ENCODE measurements at regions of chr3 and their contacts with region 1.

Region 1: DNA sequence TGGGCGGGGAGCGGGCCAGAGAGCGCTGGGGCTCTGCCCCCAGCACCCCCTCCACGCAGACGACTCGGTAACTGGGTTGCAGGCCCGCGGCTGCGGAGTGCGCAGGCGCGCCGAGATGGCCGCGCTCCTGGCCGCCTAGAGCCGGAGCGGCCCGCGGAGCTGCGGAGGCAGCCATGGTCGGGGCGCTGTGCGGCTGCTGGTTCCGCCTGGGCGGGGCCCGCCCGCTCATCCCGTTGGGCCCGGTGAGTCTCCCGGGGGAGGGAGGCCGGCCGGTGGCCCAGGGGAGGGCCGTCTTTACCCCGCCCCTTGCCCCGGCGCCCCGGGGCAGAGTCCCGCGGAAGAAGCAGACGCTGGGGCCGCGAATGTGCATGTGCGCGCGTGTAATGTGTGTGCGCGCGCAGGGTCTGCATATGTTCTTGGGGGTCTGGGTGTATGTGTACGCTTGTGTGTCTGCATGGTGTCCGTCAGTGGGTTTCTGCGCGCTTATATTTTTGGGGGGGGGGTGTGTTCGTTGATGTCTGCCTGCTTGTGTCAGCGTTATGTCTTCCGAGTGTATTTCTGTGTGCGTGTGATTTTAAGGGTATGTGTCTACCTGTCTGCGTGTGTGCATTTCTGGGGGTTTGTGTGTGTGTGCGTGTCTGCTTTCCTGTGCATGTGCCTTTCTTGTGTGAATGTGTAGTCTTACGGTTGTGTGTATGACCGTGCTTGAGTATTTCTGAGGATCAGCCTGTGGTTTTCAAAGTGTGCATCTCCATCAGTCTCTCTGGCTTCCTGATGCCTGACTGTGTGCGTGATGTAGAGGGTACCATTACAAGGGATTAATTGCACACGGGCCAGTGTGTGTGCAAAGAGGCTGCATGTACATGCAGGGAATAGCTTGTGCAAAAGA is at the start of gene ABHD14A:
- DNase-seq: peak; percentile 79 to 90
- ATAC-seq: peak; percentile 87
- H3K4me3 ChIP-seq: peak within 1 kb of the TSS; percentile 44 to 60
- H3K27ac ChIP-seq: peak within 1 kb of the TSS in 1 of 2 donors; percentile 41
- H3K4me1 ChIP-seq: no peaks in the 10 kb centered on the region
- H3K27me3 ChIP-seq: no peaks in the 10 kb centered on the region
- total RNA-seq, gene ABHD14A: 4.7 to 16.0 TPM

Region 2: GRCh38 chr3:51941798-51942602 is 33.2 kb before region 1 on chr3 and contains the starts of genes PARP3 and RRP9:
- intact Hi-C with region 1: loop called in 1 of 2 experiments (anchors 1 kb)
- DNase-seq: peak; percentile 100
- ATAC-seq: peak; percentile 96
- H3K4me3 ChIP-seq: peak within 1 kb of the TSS; percentile 64 to 72
- H3K27ac ChIP-seq: peak within 1 kb of the TSS; percentile 83 to 94
- H3K4me1 ChIP-seq: no peaks in the 10 kb centered on the region
- H3K27me3 ChIP-seq: no peaks in the 10 kb centered on the region
- total RNA-seq, gene PARP3: 11.6 to 18.1 TPM
- total RNA-seq, gene RRP9: 9.3 to 11.4 TPM

Region 3: DNA sequence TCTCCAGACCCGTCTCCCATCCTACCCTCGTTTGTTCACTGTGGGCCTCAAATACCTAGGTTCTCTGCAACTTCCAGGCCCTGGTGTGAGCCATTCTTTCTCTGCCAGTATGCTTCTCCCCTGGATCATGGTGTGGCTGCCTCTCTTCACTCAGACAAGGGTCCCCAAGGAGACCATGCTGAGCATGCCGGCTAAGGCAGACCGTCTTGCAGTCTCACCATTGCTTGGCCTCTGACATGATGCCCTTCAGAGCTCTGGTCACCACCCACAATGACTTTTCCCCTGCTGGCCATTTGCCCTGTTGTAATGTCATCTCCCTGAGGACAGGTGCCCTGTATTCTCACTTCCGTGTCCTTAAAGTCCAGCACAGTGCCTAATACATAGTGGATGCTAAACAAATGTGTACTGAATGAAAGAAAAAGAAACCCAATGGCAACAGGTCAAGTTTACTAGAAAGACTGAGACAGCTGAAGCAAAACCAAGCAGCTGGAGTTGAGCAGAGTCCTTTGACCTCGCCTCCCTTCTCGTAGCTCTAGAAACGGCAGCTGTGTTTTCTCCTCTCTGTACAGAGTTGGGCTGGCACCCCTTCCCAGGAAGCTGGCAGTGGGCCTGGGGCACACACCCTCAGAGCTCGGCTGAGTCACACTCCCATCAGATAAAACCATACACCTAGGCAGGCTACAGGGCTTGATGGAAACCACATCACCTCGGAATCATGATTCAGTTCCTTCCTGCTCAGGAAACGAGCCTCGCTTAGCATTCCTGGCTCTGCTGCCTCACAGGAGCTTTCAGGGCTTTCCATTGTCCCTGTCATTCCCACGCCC is 241.6 kb after region 1 on chr3:
- intact Hi-C with region 1: no loop called
- DNase-seq: peak in 1 of 2 donors; percentile 73
- ATAC-seq: peak; percentile 67
- H3K4me3 ChIP-seq: no peak overlapping the region
- H3K27ac ChIP-seq: no peak overlapping the region
- H3K4me1 ChIP-seq: no peaks in the 10 kb centered on the region
- H3K27me3 ChIP-seq: no peaks in the 10 kb centered on the region

Region 4: DNA sequence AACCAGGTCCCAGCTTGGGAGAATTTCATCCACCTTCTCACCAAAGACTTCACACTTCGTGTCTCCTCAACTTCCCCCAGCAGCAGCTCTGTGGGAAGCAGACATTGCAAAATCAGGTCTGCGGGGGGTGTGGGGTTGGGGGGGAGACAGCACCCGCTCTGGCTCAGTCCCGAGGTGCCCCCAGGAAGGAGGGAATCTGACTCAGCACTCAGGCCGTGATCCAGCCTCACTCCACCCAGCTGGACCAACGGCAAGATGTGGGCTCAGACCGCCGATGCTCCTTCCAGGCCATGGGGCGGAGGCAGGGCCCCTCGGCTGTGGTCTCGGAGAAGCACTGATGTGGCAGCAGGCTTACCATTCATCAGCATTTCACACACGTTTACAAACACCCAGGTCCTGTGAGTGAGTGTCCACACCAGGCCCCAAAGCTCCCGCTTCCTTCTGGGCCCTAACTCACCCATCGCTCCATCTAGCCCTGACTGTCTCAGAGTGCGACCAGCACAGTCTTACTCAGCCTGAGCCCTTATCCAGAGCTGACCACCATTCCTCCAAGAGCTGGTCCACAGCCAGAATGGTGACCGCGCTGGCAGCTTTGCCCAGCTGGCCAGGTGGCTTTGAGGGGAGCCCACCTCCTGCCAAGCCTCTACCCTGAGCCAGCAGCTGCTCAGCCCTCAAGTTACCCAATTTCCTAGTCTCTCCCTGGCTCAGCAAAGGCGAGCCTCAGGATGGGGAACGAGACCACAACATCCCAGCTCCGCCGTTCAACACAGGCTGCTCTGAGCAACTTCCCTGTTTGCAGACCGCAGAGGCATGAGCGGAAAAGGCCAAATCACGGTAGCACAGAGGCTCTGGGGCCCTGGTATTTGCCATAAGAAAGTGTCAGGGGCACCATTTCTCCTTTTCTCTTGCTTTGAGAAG is 523.2 kb after region 1 on chr3:
- intact Hi-C with region 1: no loop called
- DNase-seq: peak in 1 of 2 donors; percentile 87
- ATAC-seq: peak; percentile 21
- H3K4me3 ChIP-seq: no peak overlapping the region
- H3K27ac ChIP-seq: no peak overlapping the region
- H3K4me1 ChIP-seq: no peaks in the 10 kb centered on the region
- H3K27me3 ChIP-seq: no peaks in the 10 kb centered on the region

Measured in aorta (tissue), 5 donors.